ENCODE measurements at regions of chr12 and their contacts with region 1.

Region 1: GRCh38 chr12:55915482-55915859 is 12.2 kb downstream of the PYM1 start:
- DNase-seq: no peak
- H3K4me3 ChIP-seq: no peak overlapping the region
- H3K27ac ChIP-seq: no peak overlapping the region
- H3K4me1 ChIP-seq: no peaks in the 10 kb centered on the region
- H3K27me3 ChIP-seq: no peaks in the 10 kb centered on the region
- CTCF ChIP-seq: no peak
- EP300 ChIP-seq: no peak
- POLR2A ChIP-seq: no peak
- RAD21 ChIP-seq: no peak

Region 2: GRCh38 chr12:55926738-55927587 is 11.5 kb after region 1 on chr12:
- CTCF ChIA-PET with region 1: interaction called, 41 read pairs
- POLR2A ChIA-PET with region 1: interaction called, 21 read pairs
- DNase-seq: peak; percentile 84 to 94
- H3K4me3 ChIP-seq: peak overlapping the region; percentile 90 to 100 (median 94)
- H3K27ac ChIP-seq: peak overlapping the region; percentile 84
- H3K4me1 ChIP-seq: peaks cover 8 to 19% (median 11%) of the 10 kb centered on the region in 4 experiments; a peak in 6 of 7 replicates
- H3K27me3 ChIP-seq: peaks cover 0 to 6% (median 1%) of the 10 kb centered on the region in 4 experiments; a peak in 2 of 7 replicates
- CTCF ChIP-seq: peak; percentile 51 to 66 (median 59)
- EP300 ChIP-seq: no peak
- POLR2A ChIP-seq: peak in 1 of 2 experiments; percentile 39; a peak in 2 of 3 replicates
- RAD21 ChIP-seq: peak; percentile 23 to 35; a peak in 3 of 4 replicates